ENCODE measurements at regions of chr6 and their contacts with region 1.

Region 1: DNA sequence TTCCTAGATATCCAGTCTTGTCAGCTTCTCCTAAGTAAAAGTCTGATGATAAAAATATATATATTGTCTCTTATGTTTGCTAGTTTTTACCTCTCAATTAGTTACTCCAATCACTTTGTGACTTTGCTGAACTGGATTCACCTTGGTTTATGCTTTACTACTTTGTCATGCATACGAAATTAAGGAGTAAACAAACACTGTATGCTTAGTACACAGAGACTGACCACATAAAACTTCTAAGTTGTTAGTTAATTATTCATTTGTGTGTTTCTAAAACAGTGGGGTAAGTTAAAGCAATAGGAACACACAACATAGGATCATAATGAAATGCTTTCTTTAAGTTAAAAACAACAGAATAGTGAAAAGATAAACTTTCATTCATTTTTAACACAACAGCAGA is 877.3 kb upstream of the MAP3K7 start:
- DNase-seq: no peak
- H3K4me3 ChIP-seq: no peak overlapping the region
- H3K27ac ChIP-seq: no peak overlapping the region
- H3K4me1 ChIP-seq: no peaks in the 10 kb centered on the region
- H3K27me3 ChIP-seq: no peaks in the 10 kb centered on the region
- CTCF ChIP-seq: no peak

Region 2: DNA sequence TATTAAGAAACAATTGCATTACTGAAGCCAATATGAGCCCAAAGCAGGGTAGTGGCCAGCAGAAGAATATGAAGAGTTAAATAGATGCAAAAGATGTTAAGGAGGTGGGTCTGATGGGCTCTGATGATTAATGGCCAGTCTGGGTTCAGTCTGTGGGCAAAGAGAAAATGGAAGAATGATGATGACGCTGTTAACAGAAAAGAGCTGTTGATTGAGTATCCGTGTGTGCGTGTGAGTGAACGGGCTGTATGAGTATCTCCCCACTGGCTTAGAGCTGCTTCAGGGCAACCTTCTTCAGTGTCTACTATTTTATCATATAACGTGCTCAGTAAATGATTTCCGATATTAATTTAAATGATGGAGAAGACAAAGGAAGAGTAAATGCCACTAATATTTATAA is 154.0 kb before region 1 on chr6:
- CTCF ChIA-PET with region 1: no interaction called
- dilution Hi-C with region 1: no loop called
- in situ Hi-C with region 1: no loop called
- intact Hi-C with region 1: loop called (anchors 5 kb)
- DNase-seq: no peak
- H3K4me3 ChIP-seq: no peak overlapping the region
- H3K27ac ChIP-seq: no peak overlapping the region
- H3K4me1 ChIP-seq: no peaks in the 10 kb centered on the region
- H3K27me3 ChIP-seq: peaks cover 2% of the 10 kb centered on the region
- CTCF ChIP-seq: no peak

Region 3: GRCh38 chr6:91420243-91420642 is 44.0 kb before region 1 on chr6:
- CTCF ChIA-PET with region 1: no interaction called
- dilution Hi-C with region 1: no loop called
- in situ Hi-C with region 1: no loop called
- intact Hi-C with region 1: no loop called
- DNase-seq: no peak
- H3K4me3 ChIP-seq: no peak overlapping the region
- H3K27ac ChIP-seq: no peak overlapping the region
- H3K4me1 ChIP-seq: no peaks in the 10 kb centered on the region
- H3K27me3 ChIP-seq: no peaks in the 10 kb centered on the region
- CTCF ChIP-seq: no peak

Region 4: GRCh38 chr6:91482498-91482897 is 18.3 kb after region 1 on chr6:
- CTCF ChIA-PET with region 1: no interaction called
- dilution Hi-C with region 1: no loop called
- in situ Hi-C with region 1: no loop called
- intact Hi-C with region 1: no loop called
- DNase-seq: no peak
- H3K4me3 ChIP-seq: no peak overlapping the region
- H3K27ac ChIP-seq: no peak overlapping the region
- H3K4me1 ChIP-seq: no peaks in the 10 kb centered on the region
- H3K27me3 ChIP-seq: no peaks in the 10 kb centered on the region
- CTCF ChIP-seq: no peak